Thyroid gland (tissue), 4 donors: ENCODE measurements at regions of chr3 and their contacts with region 1.

Region 1: DNA sequence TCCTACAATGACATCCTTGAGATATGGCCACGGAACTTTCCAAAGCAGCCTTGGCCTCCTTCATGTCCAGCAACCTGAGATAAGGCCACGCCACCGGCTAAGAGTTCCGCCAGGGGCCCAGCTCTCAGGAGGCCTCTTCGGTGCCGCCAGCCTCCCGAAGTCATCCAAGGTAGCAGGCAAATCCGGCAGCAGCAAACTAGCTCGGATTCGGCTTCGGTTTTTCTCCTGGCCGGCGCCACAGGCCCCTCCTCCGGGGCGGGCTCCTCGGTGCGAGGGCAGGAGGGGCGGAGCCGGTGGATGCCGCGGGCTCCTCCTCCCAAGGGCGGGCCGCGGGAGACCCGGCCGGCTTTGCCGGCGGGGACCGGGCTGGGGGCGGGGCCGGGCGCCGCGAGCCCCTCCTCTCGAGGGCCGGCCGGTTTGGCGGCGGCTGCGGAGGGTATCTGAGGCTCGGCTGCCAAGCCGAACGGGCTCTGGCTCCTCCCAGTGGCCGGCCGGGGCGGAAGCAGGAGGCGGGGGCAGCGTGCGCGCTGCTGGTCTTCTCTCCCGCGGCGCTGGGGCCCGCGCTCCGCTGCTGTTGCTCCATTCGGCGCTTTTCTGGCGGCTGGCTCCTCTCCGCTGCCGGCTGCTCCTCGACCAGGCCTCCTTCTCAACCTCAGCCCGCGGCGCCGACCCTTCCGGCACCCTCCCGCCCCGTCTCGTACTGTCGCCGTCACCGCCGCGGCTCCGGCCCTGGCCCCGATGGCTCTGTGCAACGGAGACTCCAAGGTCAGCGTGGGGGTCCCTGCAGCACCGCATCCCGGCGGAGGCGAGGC is at the start of gene GMPS:
- DNase-seq: peak; percentile 93 to 96
- H3K4me3 ChIP-seq: peak within 1 kb of the TSS; percentile 84 to 97 (median 97)
- H3K27ac ChIP-seq: peak within 1 kb of the TSS; percentile 85 to 96 (median 95)
- H3K4me1 ChIP-seq: peaks cover 12 to 15% of the 10 kb centered on the region in 2 donors
- H3K27me3 ChIP-seq: no peaks in the 10 kb centered on the region
- CTCF ChIP-seq: peak in 3 of 6 experiments; percentile 48 to 65 (median 52)
- POLR2A ChIP-seq: peak; percentile 61 to 86
- total RNA-seq, gene GMPS: 31.5 to 40.5 (median 37.1) TPM

Region 2: GRCh38 chr3:155605571-155605970 is 264.8 kb before region 1 on chr3:
- intact Hi-C with region 1: no loop called
- DNase-seq: no peak
- H3K4me3 ChIP-seq: no peak overlapping the region
- H3K27ac ChIP-seq: no peak overlapping the region
- H3K4me1 ChIP-seq: peaks cover 4 to 5% of the 10 kb centered on the region in 2 donors
- H3K27me3 ChIP-seq: no peaks in the 10 kb centered on the region
- CTCF ChIP-seq: no peak
- POLR2A ChIP-seq: no peak

Region 3: DNA sequence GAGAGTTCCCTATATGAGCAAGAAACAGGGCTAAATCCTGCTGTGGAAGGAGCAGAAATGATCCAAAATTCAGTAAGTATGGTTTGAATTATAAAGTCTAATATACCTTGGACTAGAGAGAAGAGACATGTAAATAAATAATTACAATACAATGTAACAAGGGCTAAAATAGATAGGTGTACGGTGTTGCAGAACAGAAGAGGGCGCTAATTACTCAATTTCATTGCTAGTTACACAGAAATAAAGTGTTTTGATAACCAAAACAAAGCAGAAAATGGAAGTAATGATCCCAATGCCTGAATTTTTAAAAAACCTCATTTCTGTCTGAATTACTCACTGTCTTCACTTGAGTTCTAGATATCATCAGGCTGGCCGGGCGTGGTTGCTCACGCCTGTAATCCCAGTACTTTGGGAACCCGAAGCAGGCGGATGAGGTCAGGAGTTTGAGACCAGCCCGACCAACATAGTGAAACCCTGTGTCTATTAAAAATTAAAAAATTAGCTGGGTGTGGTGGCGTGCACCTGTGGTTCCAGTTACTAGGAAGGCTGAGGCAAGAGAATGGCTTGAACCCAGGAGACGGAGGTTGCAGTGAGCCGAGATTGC is 117.2 kb before region 1 on chr3:
- intact Hi-C with region 1: loop called (anchors 5 kb)
- DNase-seq: no peak
- H3K4me3 ChIP-seq: no peak overlapping the region
- H3K27ac ChIP-seq: no peak overlapping the region
- H3K4me1 ChIP-seq: no peaks in the 10 kb centered on the region
- H3K27me3 ChIP-seq: no peaks in the 10 kb centered on the region
- CTCF ChIP-seq: peak in 3 of 6 experiments; percentile 34 to 41 (median 40)
- POLR2A ChIP-seq: no peak

Region 4: DNA sequence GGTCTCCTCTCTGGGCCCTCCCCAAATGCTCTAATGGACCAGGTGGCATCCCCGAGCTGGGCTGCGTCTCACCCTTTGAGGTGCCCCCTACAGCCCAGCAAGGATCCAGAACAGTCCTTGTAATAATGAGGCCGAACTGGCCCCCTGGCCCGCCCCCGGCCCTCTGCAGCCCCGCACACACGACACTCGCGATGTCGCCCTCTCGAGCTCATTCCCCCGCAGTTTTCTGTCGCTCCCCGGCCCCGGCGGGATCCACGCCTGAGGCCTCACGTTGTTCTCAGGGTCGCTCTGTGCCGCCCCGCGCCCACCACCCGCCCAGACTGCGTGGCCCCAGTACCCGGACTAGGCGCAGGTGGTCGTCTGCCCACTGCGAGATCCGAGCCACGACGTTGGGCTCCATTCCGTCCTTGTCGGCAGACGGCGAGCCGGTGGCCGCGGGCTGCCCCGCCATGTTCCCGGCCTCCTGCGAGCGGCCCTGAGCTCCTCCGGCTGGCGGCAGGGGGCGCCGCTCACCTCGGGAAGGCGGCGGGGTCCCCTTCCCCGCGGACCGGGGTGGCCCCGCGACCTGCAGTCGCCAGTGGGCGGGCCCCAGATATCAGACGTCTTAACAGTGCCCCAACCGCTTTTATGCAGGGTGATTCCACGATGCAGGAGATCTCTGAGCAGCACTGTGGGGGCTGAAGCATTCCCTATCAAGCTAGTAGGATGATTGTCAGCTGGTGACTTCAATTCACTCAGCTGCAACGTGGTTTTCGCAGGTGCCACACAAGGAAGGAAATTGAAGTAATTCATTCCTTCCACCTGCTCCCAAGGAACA is 64.3 kb before region 1 on chr3 and contains the start of gene C3orf33:
- intact Hi-C with region 1: loop called (anchors 10 kb)
- DNase-seq: peak; percentile 75 to 78
- H3K4me3 ChIP-seq: peak within 1 kb of the TSS; percentile 72 to 93 (median 78)
- H3K27ac ChIP-seq: peak within 1 kb of the TSS; percentile 86 to 95 (median 90)
- H3K4me1 ChIP-seq: peaks cover 5 to 14% of the 10 kb centered on the region in 2 donors
- H3K27me3 ChIP-seq: no peaks in the 10 kb centered on the region
- CTCF ChIP-seq: peak; percentile 53 to 96 (median 73)
- POLR2A ChIP-seq: peak in 1 of 2 donors; percentile 58
- total RNA-seq, gene C3orf33: 8.9 to 16.3 (median 10.7) TPM